ENCODE measurements at regions of chr22 and their contacts with region 1.

Region 1: GRCh38 chr22:25722626-25723025 is 19.4 kb upstream of the MYO18B start:
- DNase-seq: no peak
- H3K4me3 ChIP-seq: no peak overlapping the region
- H3K27ac ChIP-seq: no peak overlapping the region
- H3K4me1 ChIP-seq: no peaks in the 10 kb centered on the region
- H3K27me3 ChIP-seq: no peaks in the 10 kb centered on the region
- CTCF ChIP-seq: no peak
- POLR2A ChIP-seq: no peak

Region 2: GRCh38 chr22:25797498-25798290 is 75.1 kb after region 1 on chr22:
- intact Hi-C with region 1: loop called (anchors 2 kb)
- DNase-seq: no peak
- H3K4me3 ChIP-seq: no peak overlapping the region
- H3K27ac ChIP-seq: no peak overlapping the region
- H3K4me1 ChIP-seq: no peaks in the 10 kb centered on the region
- H3K27me3 ChIP-seq: peaks cover 0 to 11% of the 10 kb centered on the region in 2 donors
- CTCF ChIP-seq: no peak
- POLR2A ChIP-seq: no peak

Region 3: GRCh38 chr22:25987948-25988347 is 265.3 kb after region 1 on chr22:
- intact Hi-C with region 1: no loop called
- DNase-seq: no peak
- H3K4me3 ChIP-seq: no peak overlapping the region
- H3K27ac ChIP-seq: no peak overlapping the region
- H3K4me1 ChIP-seq: no peaks in the 10 kb centered on the region
- H3K27me3 ChIP-seq: peaks cover 0 to 30% of the 10 kb centered on the region in 2 donors
- CTCF ChIP-seq: no peak
- POLR2A ChIP-seq: no peak